Ascending aorta (tissue), 2 donors: ENCODE measurements at regions of chr3 and their contacts with region 1.

Region 1: GRCh38 chr3:9067352-9067975 is 104.2 kb upstream of the RAD18 start:
- DNase-seq: peak in 1 of 2 donors; percentile 69
- H3K4me3 ChIP-seq: no peak overlapping the region
- H3K27ac ChIP-seq: no peak overlapping the region
- H3K4me1 ChIP-seq: no peaks in the 10 kb centered on the region
- H3K27me3 ChIP-seq: no peaks in the 10 kb centered on the region
- CTCF ChIP-seq: peak; percentile 67 to 95 (median 81)

Region 2: DNA sequence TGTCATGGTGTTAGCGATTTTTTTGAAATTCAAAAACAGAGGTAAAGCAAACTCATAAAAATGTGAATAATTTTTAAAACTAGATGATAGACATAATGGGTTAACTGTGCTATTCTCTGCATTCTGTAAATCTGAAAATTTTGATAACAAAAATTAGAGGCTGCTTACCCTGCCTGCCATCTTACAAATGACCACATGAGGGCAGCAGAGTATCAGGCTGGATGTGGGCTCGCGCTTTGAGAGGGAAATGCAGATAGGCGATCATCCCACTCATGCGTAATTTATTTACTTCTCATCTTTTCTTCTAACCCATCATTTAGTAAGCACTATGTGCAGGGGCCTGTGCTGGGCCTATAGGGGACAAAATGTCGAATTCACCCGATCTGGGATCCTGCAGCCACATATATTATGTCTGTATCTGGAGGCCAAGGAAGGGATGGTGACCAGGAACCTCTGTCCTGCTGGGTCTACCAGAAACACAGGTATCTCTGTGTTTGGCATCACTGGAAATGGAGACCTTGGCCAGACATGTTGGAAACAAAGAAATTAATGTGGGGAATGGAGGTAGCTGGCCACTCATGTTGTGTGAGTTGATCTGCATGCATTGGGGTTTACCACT is 96.4 kb before region 1 on chr3:
- intact Hi-C with region 1: loop called (anchors 1 kb)
- DNase-seq: peak in 1 of 2 donors; percentile 75
- H3K4me3 ChIP-seq: no peak overlapping the region
- H3K27ac ChIP-seq: no peak overlapping the region
- H3K4me1 ChIP-seq: no peaks in the 10 kb centered on the region
- H3K27me3 ChIP-seq: no peaks in the 10 kb centered on the region
- CTCF ChIP-seq: peak; percentile 90 to 98 (median 95)

Region 3: DNA sequence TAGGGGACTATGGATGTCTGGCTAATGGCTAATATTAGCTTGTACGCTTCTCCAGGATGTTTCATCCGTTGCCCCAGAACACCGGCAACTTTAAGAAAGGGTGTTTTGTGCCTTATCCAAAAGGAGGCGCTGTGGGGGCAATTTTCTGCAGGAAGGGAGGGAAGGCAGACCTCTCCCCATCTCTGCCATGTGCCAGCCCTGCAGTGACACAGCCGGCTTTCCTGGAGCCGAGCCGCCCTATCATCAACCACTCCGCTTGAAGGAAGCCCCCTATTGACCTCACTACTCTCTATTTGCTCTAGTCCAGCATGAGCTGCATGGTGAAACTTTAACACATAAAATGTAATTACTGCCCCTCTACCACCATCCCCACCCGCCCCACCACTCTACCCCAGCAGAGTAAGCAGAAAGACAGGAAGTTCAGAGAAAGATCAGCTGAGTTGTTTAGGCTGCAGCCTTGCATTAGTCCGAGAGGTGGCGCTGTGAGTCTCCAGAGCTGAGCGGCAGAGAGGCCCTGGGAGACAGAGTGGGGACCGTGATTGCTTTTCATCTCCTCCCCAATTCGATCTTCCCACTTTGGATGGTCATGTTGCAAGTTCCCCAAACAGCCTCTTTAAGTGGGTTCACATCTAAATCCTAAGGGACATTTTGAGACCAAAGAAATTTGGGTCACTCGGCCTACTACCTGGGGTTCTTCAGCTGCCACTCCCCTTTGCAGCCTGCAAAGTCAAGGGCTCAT is 79.7 kb before region 1 on chr3:
- intact Hi-C with region 1: loop called (anchors 1 kb)
- DNase-seq: peak in 1 of 2 donors; percentile 73
- H3K4me3 ChIP-seq: no peak overlapping the region
- H3K27ac ChIP-seq: no peak overlapping the region
- H3K4me1 ChIP-seq: no peaks in the 10 kb centered on the region
- H3K27me3 ChIP-seq: no peaks in the 10 kb centered on the region
- CTCF ChIP-seq: peak; percentile 48 to 77 (median 75)

Region 4: DNA sequence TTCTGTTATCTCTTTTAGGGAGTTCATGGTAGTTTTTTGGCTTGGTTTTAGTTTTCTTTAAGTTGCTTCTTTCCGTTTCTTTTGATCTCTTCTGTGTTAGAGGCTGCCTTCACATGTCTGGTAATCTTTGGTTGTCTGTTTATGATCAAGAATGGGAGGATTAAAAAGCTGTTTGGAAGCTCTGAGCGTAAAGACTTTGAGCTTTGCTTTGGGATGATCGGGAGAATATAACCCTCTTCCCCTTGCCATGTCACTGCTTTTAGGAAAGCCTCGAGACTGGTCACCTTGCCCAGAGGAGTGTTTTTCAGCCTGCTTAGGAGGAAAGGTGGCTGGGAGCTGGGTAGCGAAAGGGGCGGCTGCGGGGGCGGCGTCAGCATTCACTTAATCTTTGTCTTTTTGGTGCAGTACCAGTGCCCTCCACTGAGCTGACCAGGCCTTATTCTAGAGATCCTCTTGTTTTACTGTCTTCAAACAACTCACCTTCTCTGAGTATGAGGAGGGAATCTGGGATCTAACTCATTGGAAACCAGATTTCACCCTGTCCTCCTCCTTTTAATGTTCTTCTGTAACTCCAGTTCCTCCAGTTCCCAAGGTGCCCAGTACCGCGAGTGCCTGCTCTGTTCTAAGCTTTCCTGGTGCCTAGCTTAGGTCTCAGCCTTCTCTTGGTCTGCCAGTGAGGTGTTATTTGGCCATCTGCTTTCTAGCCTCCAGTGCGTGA is 1196.3 kb after region 1 on chr3:
- intact Hi-C with region 1: no loop called
- DNase-seq: no peak
- H3K4me3 ChIP-seq: no peak overlapping the region
- H3K27ac ChIP-seq: no peak overlapping the region
- H3K4me1 ChIP-seq: peaks cover 0 to 5% of the 10 kb centered on the region in 2 donors
- H3K27me3 ChIP-seq: no peaks in the 10 kb centered on the region
- CTCF ChIP-seq: peak in 2 of 3 experiments; percentile 43 to 48